Left ventricle myocardium superior (tissue), 1 donor: ENCODE measurements at regions of chr5 and their contacts with region 1.

Region 1: DNA sequence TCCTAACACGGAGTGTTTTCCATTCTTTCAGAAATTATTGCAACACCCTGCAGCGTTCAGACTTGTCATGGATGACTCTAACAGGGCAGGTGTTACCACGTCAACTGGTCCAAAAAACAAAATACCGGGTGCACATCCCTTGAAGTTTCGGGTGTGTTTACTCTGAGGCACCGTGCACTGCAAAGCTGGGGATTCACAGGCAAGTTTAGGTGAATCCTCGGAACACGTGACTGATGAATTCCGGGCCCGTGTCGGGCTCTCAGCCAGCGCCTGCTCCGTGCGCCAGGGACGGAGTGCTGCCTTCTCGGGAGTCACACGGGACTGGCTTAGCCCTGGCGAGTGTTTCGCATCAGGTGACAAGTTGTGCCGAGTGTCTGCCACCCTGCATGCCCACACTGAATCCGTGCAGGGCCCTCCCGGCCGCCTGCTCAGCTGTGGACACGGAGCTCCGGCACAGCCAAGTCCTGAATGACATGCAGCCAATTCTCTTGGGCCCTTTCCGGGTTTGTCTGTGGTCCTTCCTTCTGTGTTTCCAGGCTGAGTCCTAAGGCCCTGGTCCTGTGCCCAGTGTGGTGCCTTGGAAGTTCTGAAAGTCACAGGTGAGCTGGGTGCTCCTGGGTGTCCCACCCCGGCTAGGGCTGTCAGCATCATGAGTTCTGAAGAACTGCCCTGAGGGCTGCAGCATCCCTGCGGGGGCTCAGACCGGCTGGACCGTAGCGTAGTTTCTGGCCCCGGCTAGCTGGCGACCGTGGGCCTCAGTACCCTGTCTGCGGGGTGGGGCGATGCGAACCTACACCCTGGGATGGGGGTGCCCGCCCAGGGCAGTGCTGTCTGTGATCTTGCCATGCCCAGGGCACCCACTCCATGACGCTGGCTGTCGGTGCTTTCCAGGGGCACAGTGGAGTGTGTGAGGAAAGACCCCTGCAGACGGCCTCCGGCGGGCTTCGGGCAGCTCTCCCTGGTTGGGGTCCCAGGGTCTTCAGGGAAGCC is 66.2 kb upstream of the IRX4 start:
- DNase-seq: peak; percentile 90
- ATAC-seq: peak; percentile 89

Region 2: DNA sequence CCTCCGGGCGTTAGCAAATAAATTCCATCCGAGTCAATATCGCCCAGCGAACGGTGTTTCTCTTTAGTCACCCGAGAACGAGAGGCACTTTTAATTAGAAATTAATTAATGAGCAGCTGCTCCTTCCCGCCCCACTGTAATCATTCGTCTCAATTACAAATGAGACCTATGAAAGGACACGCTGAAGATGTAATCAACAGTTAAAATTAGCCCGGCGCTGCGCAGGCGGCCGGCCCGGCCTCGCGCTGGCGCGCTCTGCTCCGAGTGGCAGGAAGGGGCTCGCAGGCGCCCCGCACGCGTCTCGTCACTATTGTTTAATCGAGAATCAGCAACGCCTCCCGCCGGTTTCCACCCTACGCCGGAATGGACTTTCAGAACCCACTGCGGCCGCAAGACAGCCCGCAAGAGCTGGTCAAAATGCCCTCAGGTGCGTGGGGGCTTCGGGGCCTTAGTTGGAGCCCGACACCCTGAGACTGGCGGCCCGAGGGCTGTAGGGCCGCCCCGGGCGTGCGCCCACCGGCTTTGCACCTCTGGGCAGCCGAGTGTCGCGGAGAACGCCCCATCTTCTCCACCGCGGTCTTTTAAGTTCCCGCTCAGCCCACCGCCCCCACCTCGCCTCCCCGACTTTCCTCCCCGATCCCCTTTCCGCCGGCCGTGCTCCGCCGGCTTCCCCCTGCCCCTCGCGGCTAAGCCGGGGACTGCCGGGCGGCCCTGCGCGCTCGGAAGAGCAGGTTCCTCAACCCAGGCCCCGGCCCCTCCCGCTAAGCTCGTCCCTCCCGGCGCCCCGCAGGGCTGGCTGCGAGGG is 65.6 kb before region 1 on chr5:
- intact Hi-C with region 1: loop called (anchors 5 kb)
- DNase-seq: peak; percentile 66
- ATAC-seq: peak; percentile 63